ENCODE measurements at regions of chr15 and their contacts with region 1.

Region 1: DNA sequence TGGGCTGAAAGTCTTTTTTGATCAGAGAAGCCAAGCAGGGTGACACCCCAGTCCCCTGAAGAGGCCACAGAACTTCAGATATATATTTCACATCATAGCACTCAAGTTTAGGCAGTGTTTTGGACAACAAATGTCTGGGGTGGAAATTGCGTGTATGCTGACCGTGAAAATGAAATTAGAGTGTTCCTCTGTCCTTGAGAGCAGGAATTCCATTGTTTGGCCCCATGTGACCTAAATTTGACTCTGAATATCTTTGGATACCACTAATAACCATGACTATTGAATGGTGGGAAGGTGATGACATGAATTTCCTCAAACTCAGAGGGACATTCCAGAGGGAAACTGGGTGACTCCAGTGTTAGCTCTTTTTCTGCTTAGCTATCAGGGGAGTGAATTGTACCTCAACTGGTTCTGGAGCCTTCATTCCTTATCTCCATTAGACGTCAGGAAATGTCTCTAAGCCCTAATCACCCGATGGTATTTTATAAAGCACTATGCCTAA is 263.5 kb upstream of the RASGRP1 start:
- DNase-seq: peak; percentile 100
- H3K4me3 ChIP-seq: no peak overlapping the region
- H3K27ac ChIP-seq: peak overlapping the region; percentile 100
- H3K4me1 ChIP-seq: peaks cover 59% of the 10 kb centered on the region
- H3K27me3 ChIP-seq: no peaks in the 10 kb centered on the region
- CTCF ChIP-seq: no peak
- POLR2A ChIP-seq: peak; percentile 65

Region 2: DNA sequence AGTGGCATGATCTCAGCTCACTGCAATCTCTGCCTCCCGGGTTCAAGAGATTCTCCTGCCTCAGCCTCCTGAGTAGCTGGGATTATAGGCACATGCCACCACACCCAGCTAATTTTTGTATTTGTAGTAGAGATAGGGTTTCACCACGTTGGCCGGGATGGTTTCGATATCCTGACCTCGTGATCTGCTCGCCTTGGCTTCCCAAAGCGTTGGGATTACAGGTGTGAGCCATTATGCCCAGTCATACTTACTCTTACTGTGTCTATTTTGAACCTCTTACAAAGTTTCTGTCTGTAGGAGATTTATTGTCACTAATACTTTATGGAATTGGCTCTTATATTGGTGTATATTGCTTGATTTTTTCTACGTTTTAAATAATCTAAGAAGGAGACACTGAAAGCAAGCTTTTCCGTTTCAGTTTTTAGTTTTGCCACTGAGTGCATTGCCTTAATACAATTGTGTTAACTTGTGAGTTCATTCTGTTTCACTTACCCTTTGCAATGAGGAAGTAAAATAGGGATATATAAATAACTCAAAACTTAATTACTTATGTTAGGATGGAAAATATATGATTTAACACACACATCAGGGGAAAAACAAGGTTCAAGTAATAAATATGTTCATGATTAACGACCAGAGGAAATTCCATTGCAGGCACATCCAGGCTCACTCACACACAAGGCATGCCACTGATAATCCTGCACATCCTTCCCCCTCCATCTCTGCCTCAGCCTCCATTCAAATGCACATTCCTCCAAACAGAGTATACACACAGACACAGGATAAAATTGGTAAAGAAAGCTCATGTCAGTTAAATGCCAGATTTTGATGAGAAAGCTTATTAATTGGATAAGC is 15.9 kb after region 1 on chr15:
- CTCF ChIA-PET with region 1: interaction called, 20 read pairs
- POLR2A ChIA-PET with region 1: interaction called, 16 read pairs
- dilution Hi-C with region 1: no loop called
- intact Hi-C with region 1: loop called (anchors 1 kb)
- DNase-seq: peak; percentile 95
- H3K4me3 ChIP-seq: peak overlapping the region in 1 of 3 experiments; percentile 15
- H3K27ac ChIP-seq: peak overlapping the region; percentile 98
- H3K4me1 ChIP-seq: peaks cover 41% of the 10 kb centered on the region
- H3K27me3 ChIP-seq: no peaks in the 10 kb centered on the region
- CTCF ChIP-seq: no peak
- POLR2A ChIP-seq: peak; percentile 61

Region 3: DNA sequence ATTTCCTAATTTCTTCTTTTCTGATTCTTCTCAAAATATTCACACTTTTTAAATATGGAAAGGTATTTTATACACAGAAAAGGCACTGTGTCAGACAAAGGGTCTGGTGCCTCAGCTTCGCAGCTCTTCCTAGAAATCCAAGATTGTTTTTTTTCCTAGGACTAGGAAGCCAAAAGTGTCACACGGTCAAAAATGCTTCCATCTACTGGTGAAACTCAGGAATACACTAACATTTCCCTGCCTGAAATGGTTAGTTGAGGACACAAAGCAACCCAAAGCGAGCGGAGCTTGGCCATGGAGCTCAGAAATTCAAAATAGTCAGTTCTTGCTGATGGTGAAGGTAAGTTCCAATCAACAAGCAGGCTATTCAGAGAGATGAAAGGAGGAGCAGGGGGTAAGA is 163.0 kb after region 1 on chr15:
- CTCF ChIA-PET with region 1: interaction called, 40 read pairs
- POLR2A ChIA-PET with region 1: interaction called, 21 read pairs
- dilution Hi-C with region 1: no loop called
- intact Hi-C with region 1: loop called (anchors 1 kb)
- DNase-seq: peak; percentile 83
- H3K4me3 ChIP-seq: no peak overlapping the region
- H3K27ac ChIP-seq: peak overlapping the region; percentile 2
- H3K4me1 ChIP-seq: peaks cover 34% of the 10 kb centered on the region
- H3K27me3 ChIP-seq: no peaks in the 10 kb centered on the region
- CTCF ChIP-seq: peak; percentile 50 to 51
- POLR2A ChIP-seq: no peak

Region 4: DNA sequence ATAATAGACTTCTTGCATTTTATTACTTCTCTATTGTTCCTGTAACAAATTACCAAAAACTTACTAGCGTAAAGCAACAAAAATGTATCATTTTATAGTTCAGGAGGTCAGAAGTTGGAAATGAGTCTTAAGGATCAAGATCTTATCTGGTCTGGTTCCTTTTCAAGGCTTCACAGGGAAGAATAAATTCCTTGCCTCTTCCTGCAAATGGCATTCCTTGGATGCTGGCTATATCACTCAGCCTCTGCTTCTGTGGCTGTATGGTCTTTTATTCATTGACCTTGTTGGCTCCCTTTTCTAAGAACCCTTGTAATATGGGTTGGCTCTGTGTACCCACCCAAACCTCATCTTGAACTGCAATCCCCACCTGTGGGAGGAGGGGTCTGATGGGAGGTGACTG is 274.3 kb after region 1 on chr15:
- CTCF ChIA-PET with region 1: no interaction called
- POLR2A ChIA-PET with region 1: no interaction called
- dilution Hi-C with region 1: no loop called
- intact Hi-C with region 1: loop called (anchors 1 kb)
- DNase-seq: peak; percentile 55
- H3K4me3 ChIP-seq: no peak overlapping the region
- H3K27ac ChIP-seq: peak overlapping the region; percentile 58
- H3K4me1 ChIP-seq: peaks cover 28% of the 10 kb centered on the region
- H3K27me3 ChIP-seq: no peaks in the 10 kb centered on the region
- CTCF ChIP-seq: no peak
- POLR2A ChIP-seq: no peak

Region 5: GRCh38 chr15:39140060-39140604 is 312.1 kb after region 1 on chr15:
- CTCF ChIA-PET with region 1: no interaction called
- POLR2A ChIA-PET with region 1: no interaction called
- dilution Hi-C with region 1: loop called (anchors 25 kb)
- intact Hi-C with region 1: loop called (anchors 1 kb)
- DNase-seq: peak; percentile 100
- H3K4me3 ChIP-seq: no peak overlapping the region
- H3K27ac ChIP-seq: peak overlapping the region; percentile 96
- H3K4me1 ChIP-seq: peaks cover 34% of the 10 kb centered on the region
- H3K27me3 ChIP-seq: no peaks in the 10 kb centered on the region
- CTCF ChIP-seq: no peak
- POLR2A ChIP-seq: peak; percentile 90

Region 6: GRCh38 chr15:39396979-39397615 is 569.0 kb after region 1 on chr15:
- CTCF ChIA-PET with region 1: no interaction called
- POLR2A ChIA-PET with region 1: no interaction called
- dilution Hi-C with region 1: no loop called
- intact Hi-C with region 1: no loop called
- DNase-seq: no peak
- H3K4me3 ChIP-seq: no peak overlapping the region
- H3K27ac ChIP-seq: no peak overlapping the region
- H3K4me1 ChIP-seq: peaks cover 18% of the 10 kb centered on the region
- H3K27me3 ChIP-seq: no peaks in the 10 kb centered on the region
- CTCF ChIP-seq: no peak
- POLR2A ChIP-seq: no peak

Region 7: GRCh38 chr15:39429898-39430357 is 601.8 kb after region 1 on chr15:
- CTCF ChIA-PET with region 1: no interaction called
- POLR2A ChIA-PET with region 1: no interaction called
- dilution Hi-C with region 1: no loop called
- intact Hi-C with region 1: loop called (anchors 2 kb)
- DNase-seq: peak; percentile 99
- H3K4me3 ChIP-seq: no peak overlapping the region
- H3K27ac ChIP-seq: peak overlapping the region; percentile 98
- H3K4me1 ChIP-seq: peaks cover 52% of the 10 kb centered on the region
- H3K27me3 ChIP-seq: no peaks in the 10 kb centered on the region
- CTCF ChIP-seq: no peak
- POLR2A ChIP-seq: peak; percentile 75

Region 8: GRCh38 chr15:39869858-39870515 is 1041.9 kb after region 1 on chr15:
- CTCF ChIA-PET with region 1: no interaction called
- POLR2A ChIA-PET with region 1: no interaction called
- dilution Hi-C with region 1: no loop called
- intact Hi-C with region 1: no loop called
- DNase-seq: peak; percentile 9
- H3K4me3 ChIP-seq: no peak overlapping the region
- H3K27ac ChIP-seq: no peak overlapping the region
- H3K4me1 ChIP-seq: no peaks in the 10 kb centered on the region
- H3K27me3 ChIP-seq: no peaks in the 10 kb centered on the region
- CTCF ChIP-seq: no peak
- POLR2A ChIP-seq: no peak

Measured in endothelial cell of umbilical vein (primary cell).